Mammary epithelial cell (primary cell): ENCODE measurements at regions of chr6 and their contacts with region 1.

Region 1: DNA sequence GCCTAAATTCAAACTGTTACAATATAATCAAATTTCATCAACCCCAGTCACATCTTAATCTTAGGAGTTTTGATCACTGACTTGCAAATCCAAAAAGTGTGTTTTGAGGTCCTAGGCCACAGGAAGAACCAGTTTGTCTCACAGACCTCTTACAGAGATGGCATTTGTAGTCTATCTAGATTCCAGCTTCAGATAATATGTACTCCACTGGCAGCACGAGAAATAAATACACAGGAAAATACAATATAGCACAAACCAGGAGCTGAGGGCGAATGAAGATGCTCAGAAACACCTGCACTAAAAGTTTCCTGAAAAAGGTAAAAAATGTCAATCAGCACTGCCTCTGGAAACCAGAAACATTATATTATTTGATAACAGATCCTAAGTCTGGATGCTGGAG is 647 bp upstream of the BTN3A3 start:
- DNase-seq: peak; percentile 3
- H3K4me3 ChIP-seq: peak overlapping the region; percentile 62 to 97 (median 86)
- H3K27ac ChIP-seq: peak overlapping the region; percentile 83
- H3K4me1 ChIP-seq: peaks cover 12% of the 10 kb centered on the region
- H3K27me3 ChIP-seq: no peaks in the 10 kb centered on the region
- CTCF ChIP-seq: no peak

Region 2: DNA sequence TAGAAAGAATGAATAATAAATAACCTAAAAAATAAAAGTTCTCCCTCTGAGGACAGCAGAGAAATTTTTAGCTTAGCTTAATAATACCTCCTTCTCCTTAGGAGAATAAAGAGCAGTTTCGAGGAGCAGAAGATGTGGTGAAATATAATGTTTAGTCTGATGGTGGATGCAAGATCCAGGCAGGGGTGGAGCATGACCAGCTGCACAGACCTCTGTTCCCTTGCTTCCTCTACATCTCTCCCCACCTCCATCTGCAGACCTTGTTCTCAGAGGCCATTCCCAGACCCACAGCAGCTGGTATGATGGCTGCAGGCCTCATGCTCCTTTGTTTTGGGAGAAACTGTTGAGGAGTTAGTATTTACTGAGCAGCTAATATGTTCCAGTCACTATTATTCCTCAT is 73.2 kb before region 1 on chr6:
- CTCF ChIA-PET with region 1: no interaction called
- dilution Hi-C with region 1: no loop called
- in situ Hi-C with region 1: no loop called
- intact Hi-C with region 1: loop called (anchors 5 kb)
- DNase-seq: no peak
- H3K4me3 ChIP-seq: no peak overlapping the region
- H3K27ac ChIP-seq: no peak overlapping the region
- H3K4me1 ChIP-seq: peaks cover 8% of the 10 kb centered on the region
- H3K27me3 ChIP-seq: no peaks in the 10 kb centered on the region
- CTCF ChIP-seq: no peak

Region 3: GRCh38 chr6:26394289-26394688 is 45.4 kb before region 1 on chr6:
- CTCF ChIA-PET with region 1: no interaction called
- dilution Hi-C with region 1: loop called (anchors 5 kb)
- in situ Hi-C with region 1: no loop called
- intact Hi-C with region 1: no loop called
- DNase-seq: peak; percentile 88
- H3K4me3 ChIP-seq: no peak overlapping the region
- H3K27ac ChIP-seq: no peak overlapping the region
- H3K4me1 ChIP-seq: peaks cover 5% of the 10 kb centered on the region
- H3K27me3 ChIP-seq: no peaks in the 10 kb centered on the region
- CTCF ChIP-seq: no peak

Region 4: GRCh38 chr6:26473758-26474438 is 34.2 kb after region 1 on chr6:
- CTCF ChIA-PET with region 1: no interaction called
- dilution Hi-C with region 1: no loop called
- in situ Hi-C with region 1: no loop called
- intact Hi-C with region 1: loop called (anchors 2 kb)
- DNase-seq: peak; percentile 93
- H3K4me3 ChIP-seq: peak overlapping the region; percentile 52 to 72 (median 67)
- H3K27ac ChIP-seq: peak overlapping the region; percentile 87
- H3K4me1 ChIP-seq: peaks cover 16% of the 10 kb centered on the region
- H3K27me3 ChIP-seq: no peaks in the 10 kb centered on the region
- CTCF ChIP-seq: no peak